CD4-positive, alpha-beta T cell (primary cell): ENCODE measurements at regions of chr6 and their contacts with region 1.

Region 1: GRCh38 chr6:153023977-153024708 is 21.6 kb upstream of the MTRF1L start:
- DNase-seq: peak in 10 of 14 experiments; percentile 7 to 78 (median 26)
- ATAC-seq: peak; percentile 83
- H3K4me3 ChIP-seq: no peak overlapping the region
- H3K4me3 Mint-ChIP-seq: no peak overlapping the region
- H3K27ac ChIP-seq: no peak overlapping the region
- H3K27ac Mint-ChIP-seq: no peak overlapping the region
- H3K4me1 ChIP-seq: peaks cover 5% of the 10 kb centered on the region
- H3K4me1 Mint-ChIP-seq: no peaks in the 10 kb centered on the region
- H3K27me3 ChIP-seq: no peaks in the 10 kb centered on the region
- H3K27me3 Mint-ChIP-seq: peaks cover 59% of the 10 kb centered on the region
- CTCF ChIP-seq: peak; percentile 92

Region 2: GRCh38 chr6:152484806-152485205 is 539.3 kb before region 1 on chr6:
- CTCF ChIA-PET with region 1: no interaction called
- POLR2A ChIA-PET with region 1: no interaction called
- intact Hi-C with region 1: loop called in 1 of 2 experiments (anchors 10 kb)
- DNase-seq: no peak
- ATAC-seq: no peak
- H3K4me3 ChIP-seq: no peak overlapping the region
- H3K4me3 Mint-ChIP-seq: no peak overlapping the region
- H3K27ac ChIP-seq: no peak overlapping the region
- H3K27ac Mint-ChIP-seq: no peak overlapping the region
- H3K4me1 ChIP-seq: no peaks in the 10 kb centered on the region
- H3K4me1 Mint-ChIP-seq: no peaks in the 10 kb centered on the region
- H3K27me3 ChIP-seq: peaks cover 0 to 3% of the 10 kb centered on the region in 2 experiments
- H3K27me3 Mint-ChIP-seq: no peaks in the 10 kb centered on the region
- CTCF ChIP-seq: no peak

Region 3: GRCh38 chr6:152948150-152948768 is 75.9 kb before region 1 on chr6:
- CTCF ChIA-PET with region 1: no interaction called
- POLR2A ChIA-PET with region 1: no interaction called
- intact Hi-C with region 1: loop called in 1 of 2 experiments (anchors 2 kb)
- DNase-seq: peak in 3 of 14 experiments; percentile 40 to 56 (median 54)
- ATAC-seq: peak; percentile 65
- H3K4me3 ChIP-seq: no peak overlapping the region
- H3K4me3 Mint-ChIP-seq: no peak overlapping the region
- H3K27ac ChIP-seq: no peak overlapping the region
- H3K27ac Mint-ChIP-seq: no peak overlapping the region
- H3K4me1 ChIP-seq: peaks cover 6% of the 10 kb centered on the region
- H3K4me1 Mint-ChIP-seq: peaks cover 8% of the 10 kb centered on the region
- H3K27me3 ChIP-seq: peaks cover 8 to 13% of the 10 kb centered on the region in 2 experiments
- H3K27me3 Mint-ChIP-seq: peaks cover 39% of the 10 kb centered on the region
- CTCF ChIP-seq: peak; percentile 75